Activated CD4-positive, alpha-beta T cell treated with anti-CD3 and anti-CD28 coated beads for 36 hours (primary cell): ENCODE measurements at regions of chr2 and their contacts with region 1.

Region 1: GRCh38 chr2:227479865-227480475 is 8.0 kb downstream of the AGFG1 start:
- DNase-seq: no peak
- ATAC-seq: peak; percentile 48
- H3K4me3 Mint-ChIP-seq: peak overlapping the region; percentile 12
- H3K27ac Mint-ChIP-seq: peak overlapping the region; percentile 67
- H3K4me1 Mint-ChIP-seq: peaks cover 74% of the 10 kb centered on the region
- H3K27me3 Mint-ChIP-seq: no peaks in the 10 kb centered on the region

Region 2: GRCh38 chr2:227447606-227448005 is 32.4 kb before region 1 on chr2:
- CTCF ChIA-PET with region 1: no interaction called
- POLR2A ChIA-PET with region 1: no interaction called
- intact Hi-C with region 1: no loop called
- DNase-seq: no peak
- ATAC-seq: no peak
- H3K4me3 Mint-ChIP-seq: no peak overlapping the region
- H3K27ac Mint-ChIP-seq: no peak overlapping the region
- H3K4me1 Mint-ChIP-seq: peaks cover 3% of the 10 kb centered on the region
- H3K27me3 Mint-ChIP-seq: peaks cover 3% of the 10 kb centered on the region

Region 3: DNA sequence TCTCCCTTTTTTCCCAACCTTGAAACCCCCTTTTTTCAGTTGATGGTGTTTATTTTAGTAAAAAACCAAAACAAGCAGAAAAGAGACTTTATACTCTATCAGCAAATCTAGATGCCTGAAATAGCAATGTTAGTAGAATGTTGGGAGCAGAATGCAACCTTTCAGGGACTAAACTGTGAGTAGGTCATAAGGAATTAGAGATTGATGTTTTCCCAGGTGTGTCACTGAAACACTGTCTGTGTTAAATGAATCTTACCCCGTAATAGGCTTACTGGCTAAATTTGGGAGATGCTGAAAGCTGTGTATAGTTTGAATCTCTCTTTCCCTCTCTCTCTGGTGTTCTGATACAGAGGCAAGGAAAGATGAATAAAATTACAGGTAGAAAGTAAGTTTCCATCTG is 35.8 kb after region 1 on chr2:
- CTCF ChIA-PET with region 1: interaction called, 5 read pairs
- POLR2A ChIA-PET with region 1: no interaction called
- intact Hi-C with region 1: loop called in 1 of 2 experiments (anchors 5 kb)
- DNase-seq: no peak
- ATAC-seq: no peak
- H3K4me3 Mint-ChIP-seq: no peak overlapping the region
- H3K27ac Mint-ChIP-seq: no peak overlapping the region
- H3K4me1 Mint-ChIP-seq: peaks cover 69% of the 10 kb centered on the region
- H3K27me3 Mint-ChIP-seq: no peaks in the 10 kb centered on the region

Region 4: GRCh38 chr2:227566012-227566411 is 86.0 kb after region 1 on chr2:
- CTCF ChIA-PET with region 1: no interaction called
- POLR2A ChIA-PET with region 1: no interaction called
- intact Hi-C with region 1: loop called in 1 of 2 experiments (anchors 5 kb)
- DNase-seq: no peak
- ATAC-seq: no peak
- H3K4me3 Mint-ChIP-seq: no peak overlapping the region
- H3K27ac Mint-ChIP-seq: no peak overlapping the region
- H3K4me1 Mint-ChIP-seq: no peaks in the 10 kb centered on the region
- H3K27me3 Mint-ChIP-seq: no peaks in the 10 kb centered on the region

Region 5: GRCh38 chr2:227632827-227633226 is 152.9 kb after region 1 on chr2:
- CTCF ChIA-PET with region 1: no interaction called
- POLR2A ChIA-PET with region 1: no interaction called
- intact Hi-C with region 1: no loop called
- DNase-seq: no peak
- ATAC-seq: no peak
- H3K4me3 Mint-ChIP-seq: no peak overlapping the region
- H3K27ac Mint-ChIP-seq: no peak overlapping the region
- H3K4me1 Mint-ChIP-seq: peaks cover under 1% of the 10 kb centered on the region
- H3K27me3 Mint-ChIP-seq: peaks cover 17% of the 10 kb centered on the region